ENCODE measurements at regions of chr22 and their contacts with region 1.

Region 1: DNA sequence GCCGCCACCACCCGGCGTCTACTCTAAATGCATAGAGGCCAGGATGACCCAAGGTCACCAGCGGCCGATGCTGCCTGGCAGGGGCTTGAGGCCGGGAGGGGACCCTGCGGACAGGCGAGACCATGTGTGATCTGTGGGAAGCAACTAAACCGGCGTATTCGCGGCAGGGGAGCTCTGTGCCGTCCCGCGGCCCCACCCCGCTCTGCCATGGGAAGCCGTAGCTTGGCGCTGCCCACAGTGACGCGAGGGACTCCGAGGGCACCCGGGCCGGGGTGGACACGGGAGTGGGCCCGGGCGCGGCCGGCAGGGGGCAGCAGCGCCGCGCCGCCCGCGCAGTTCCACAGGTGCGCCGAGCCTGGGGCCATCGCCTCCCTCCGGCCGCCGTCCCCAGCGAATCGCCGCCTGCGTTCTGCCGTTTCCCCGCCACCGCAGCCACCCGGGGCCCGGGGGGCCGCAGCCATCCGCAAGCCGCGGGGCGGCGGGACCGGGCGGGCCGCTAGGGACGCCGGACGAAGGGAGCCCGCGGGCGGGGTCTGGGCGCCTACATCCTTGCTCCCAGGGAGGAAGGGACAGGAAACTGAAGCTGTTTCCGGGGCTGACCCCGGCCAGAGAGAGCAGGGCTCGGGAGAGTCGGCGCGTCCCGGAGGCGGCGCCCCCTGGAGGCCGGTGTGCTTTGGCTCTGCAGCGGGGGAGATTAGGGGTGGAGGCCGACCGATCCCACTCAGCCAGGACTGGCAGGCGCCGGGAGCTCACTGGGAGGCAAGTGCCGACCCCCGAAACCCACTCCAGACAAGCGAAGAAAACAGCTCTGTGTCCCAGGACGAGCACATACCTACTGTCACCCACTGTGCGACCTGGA is 12.5 kb upstream of the HDHD5 start:
- DNase-seq: peak; percentile 77 to 84
- ATAC-seq: peak; percentile 96
- H3K4me3 ChIP-seq: peak overlapping the region; percentile 64
- H3K27ac ChIP-seq: peak overlapping the region; percentile 97
- H3K4me1 ChIP-seq: no peaks in the 10 kb centered on the region
- CTCF ChIP-seq: peak; percentile 79
- EP300 ChIP-seq: no peak
- POLR2A ChIP-seq: peak; percentile 38
- RAD21 ChIP-seq: peak; percentile 17 to 59; a peak in 4 of 5 replicates

Region 2: GRCh38 chr22:17047656-17048055 is 123.9 kb before region 1 on chr22:
- CTCF ChIA-PET with region 1: no interaction called
- POLR2A ChIA-PET with region 1: no interaction called
- DNase-seq: no peak
- ATAC-seq: no peak
- H3K4me3 ChIP-seq: no peak overlapping the region
- H3K27ac ChIP-seq: no peak overlapping the region
- H3K4me1 ChIP-seq: no peaks in the 10 kb centered on the region
- CTCF ChIP-seq: no peak
- EP300 ChIP-seq: no peak
- POLR2A ChIP-seq: no peak
- RAD21 ChIP-seq: no peak

Region 3: GRCh38 chr22:17084554-17085276 is 86.8 kb before region 1 on chr22 and contains the start of gene IL17RA:
- CTCF ChIA-PET with region 1: interaction called, 11 read pairs
- POLR2A ChIA-PET with region 1: no interaction called
- DNase-seq: peak; percentile 26 to 81
- ATAC-seq: peak; percentile 96 to 99
- H3K4me3 ChIP-seq: peak within 1 kb of the TSS; percentile 71
- H3K27ac ChIP-seq: peak within 1 kb of the TSS; percentile 84 to 99
- H3K4me1 ChIP-seq: peaks cover 3% of the 10 kb centered on the region; the same call in 1 of the 3 replicates
- CTCF ChIP-seq: no peak
- EP300 ChIP-seq: no peak
- POLR2A ChIP-seq: peak; percentile 56
- RAD21 ChIP-seq: no peak
- polyA plus RNA-seq, gene IL17RA: 6.4 and 9.1 TPM in 2 replicates

Region 4: DNA sequence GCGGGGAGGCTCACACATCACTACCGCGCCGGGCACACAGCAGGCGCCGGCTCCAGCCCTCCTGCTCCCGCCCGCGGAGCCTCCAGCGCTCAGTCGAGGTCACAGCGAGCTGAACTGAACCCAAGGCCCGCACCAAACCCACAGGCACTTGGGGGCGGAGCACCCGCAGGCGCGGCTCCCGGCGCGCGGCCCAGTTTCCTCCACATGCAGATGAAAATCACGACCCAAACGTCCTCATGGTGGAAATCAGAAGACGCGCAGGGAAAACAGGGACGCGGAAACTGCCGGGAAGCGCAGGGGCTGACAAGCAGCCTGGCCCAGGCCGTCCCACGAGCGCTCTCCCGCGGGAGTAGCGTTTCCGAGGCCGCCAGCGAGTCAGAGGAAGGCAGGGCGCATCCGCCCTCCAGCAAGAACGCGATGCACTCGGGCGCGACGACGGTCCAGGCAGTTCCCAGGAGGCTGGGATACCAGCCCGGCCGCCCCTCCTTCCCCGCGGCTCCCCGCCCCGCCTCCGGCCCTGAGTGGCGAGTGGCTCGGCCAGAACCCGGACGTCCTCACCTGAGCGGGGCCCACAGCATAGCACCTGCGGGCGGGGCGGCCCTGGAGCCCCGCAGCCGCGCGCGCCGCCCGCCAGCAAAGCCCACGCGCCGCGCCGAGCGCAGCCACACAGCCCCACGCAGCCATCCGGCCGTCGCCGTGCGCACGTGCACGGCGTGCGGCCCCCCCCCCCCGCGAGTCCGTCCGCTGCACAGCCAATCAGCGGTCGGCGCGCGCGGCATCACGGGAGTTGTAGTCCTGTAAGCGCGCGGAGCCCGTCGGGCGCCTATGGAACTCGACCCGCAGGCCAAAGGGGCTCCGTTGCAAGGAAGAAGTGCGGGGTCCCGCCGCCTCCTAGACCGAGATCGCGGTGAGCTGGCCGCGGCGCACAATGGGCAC is 12.7 kb before region 1 on chr22 and contains the start of gene HDHD5:
- CTCF ChIA-PET with region 1: interaction called, 89 read pairs
- POLR2A ChIA-PET with region 1: interaction called, 16 read pairs
- DNase-seq: peak; percentile 66 to 83
- ATAC-seq: peak; percentile 92 to 93
- H3K4me3 ChIP-seq: peak within 1 kb of the TSS; percentile 90
- H3K27ac ChIP-seq: peak within 1 kb of the TSS; percentile 93 to 97
- H3K4me1 ChIP-seq: peaks cover 14% of the 10 kb centered on the region; the same call in 2 of the 3 replicates
- CTCF ChIP-seq: no peak
- EP300 ChIP-seq: no peak
- POLR2A ChIP-seq: peak; percentile 38
- RAD21 ChIP-seq: no peak
- polyA plus RNA-seq, gene HDHD5: 19.7 and 27.3 TPM in 2 replicates

Region 5: GRCh38 chr22:17199003-17199731 is 27.6 kb after region 1 on chr22:
- CTCF ChIA-PET with region 1: interaction called, 22 read pairs
- POLR2A ChIA-PET with region 1: interaction called, 5 read pairs
- DNase-seq: no peak
- ATAC-seq: no peak
- H3K4me3 ChIP-seq: no peak overlapping the region
- H3K27ac ChIP-seq: no peak overlapping the region
- H3K4me1 ChIP-seq: no peaks in the 10 kb centered on the region
- CTCF ChIP-seq: no peak
- EP300 ChIP-seq: no peak
- POLR2A ChIP-seq: no peak
- RAD21 ChIP-seq: no peak

Region 6: GRCh38 chr22:17492247-17492646 is 320.7 kb after region 1 on chr22:
- CTCF ChIA-PET with region 1: interaction called, 12 read pairs
- POLR2A ChIA-PET with region 1: no interaction called
- DNase-seq: no peak
- ATAC-seq: no peak
- H3K4me3 ChIP-seq: no peak overlapping the region
- H3K27ac ChIP-seq: no peak overlapping the region
- H3K4me1 ChIP-seq: no peaks in the 10 kb centered on the region
- CTCF ChIP-seq: no peak
- EP300 ChIP-seq: no peak
- POLR2A ChIP-seq: no peak
- RAD21 ChIP-seq: no peak